ENCODE measurements at regions of chrX and their contacts with region 1.

Region 1: GRCh38 chrX:20141281-20142220 is at the start of gene EIF1AX:
- DNase-seq: peak; percentile 88 to 99 (median 96)
- ATAC-seq: peak; percentile 98
- H3K4me3 ChIP-seq: peak within 1 kb of the TSS; percentile 73 to 91
- H3K4me3 Mint-ChIP-seq: peak within 1 kb of the TSS; percentile 85
- H3K27ac ChIP-seq: peak within 1 kb of the TSS; percentile 79 to 84
- H3K27ac Mint-ChIP-seq: peak within 1 kb of the TSS; percentile 89
- H3K4me1 ChIP-seq: peaks cover 15% of the 10 kb centered on the region
- H3K4me1 Mint-ChIP-seq: peaks cover 26% of the 10 kb centered on the region
- H3K27me3 ChIP-seq: no peaks in the 10 kb centered on the region
- H3K27me3 Mint-ChIP-seq: no peaks in the 10 kb centered on the region
- CTCF ChIP-seq: no peak
- total RNA-seq, gene EIF1AX: 71.7 to 73.3 TPM

Region 2: GRCh38 chrX:20071511-20072079 is 70.0 kb before region 1 on chrX:
- CTCF ChIA-PET with region 1: no interaction called
- POLR2A ChIA-PET with region 1: no interaction called
- intact Hi-C with region 1: no loop called
- DNase-seq: no peak
- ATAC-seq: no peak
- H3K4me3 ChIP-seq: no peak overlapping the region
- H3K4me3 Mint-ChIP-seq: no peak overlapping the region
- H3K27ac ChIP-seq: no peak overlapping the region
- H3K27ac Mint-ChIP-seq: no peak overlapping the region
- H3K4me1 ChIP-seq: no peaks in the 10 kb centered on the region
- H3K4me1 Mint-ChIP-seq: no peaks in the 10 kb centered on the region
- H3K27me3 ChIP-seq: no peaks in the 10 kb centered on the region
- H3K27me3 Mint-ChIP-seq: no peaks in the 10 kb centered on the region
- CTCF ChIP-seq: no peak

Region 3: GRCh38 chrX:20116579-20117240 is 24.8 kb before region 1 on chrX and contains the start of gene MAP7D2:
- CTCF ChIA-PET with region 1: no interaction called
- POLR2A ChIA-PET with region 1: no interaction called
- intact Hi-C with region 1: no loop called
- DNase-seq: no peak
- ATAC-seq: no peak
- H3K4me3 ChIP-seq: no peak within 1 kb of the TSS
- H3K4me3 Mint-ChIP-seq: peak within 1 kb of the TSS; percentile 58
- H3K27ac ChIP-seq: no peak within 1 kb of the TSS
- H3K27ac Mint-ChIP-seq: no peak within 1 kb of the TSS
- H3K4me1 ChIP-seq: no peaks in the 10 kb centered on the region
- H3K4me1 Mint-ChIP-seq: peaks cover 8% of the 10 kb centered on the region
- H3K27me3 ChIP-seq: no peaks in the 10 kb centered on the region
- H3K27me3 Mint-ChIP-seq: peaks cover 13% of the 10 kb centered on the region
- CTCF ChIP-seq: no peak
- total RNA-seq, gene MAP7D2: 0.11 TPM in 1 of 2 experiments, not detected in the other

Region 4: GRCh38 chrX:20266810-20267606 is 125.5 kb after region 1 on chrX and contains the start of gene RPS6KA3:
- CTCF ChIA-PET with region 1: no interaction called
- POLR2A ChIA-PET with region 1: no interaction called
- intact Hi-C with region 1: loop called (anchors 2 kb)
- DNase-seq: peak; percentile 79 to 94 (median 89)
- ATAC-seq: peak; percentile 83
- H3K4me3 ChIP-seq: peak within 1 kb of the TSS; percentile 70 to 85
- H3K4me3 Mint-ChIP-seq: peak within 1 kb of the TSS; percentile 96
- H3K27ac ChIP-seq: peak within 1 kb of the TSS; percentile 80 to 83
- H3K27ac Mint-ChIP-seq: peak within 1 kb of the TSS; percentile 97
- H3K4me1 ChIP-seq: peaks cover 14% of the 10 kb centered on the region
- H3K4me1 Mint-ChIP-seq: peaks cover 19% of the 10 kb centered on the region
- H3K27me3 ChIP-seq: no peaks in the 10 kb centered on the region
- H3K27me3 Mint-ChIP-seq: no peaks in the 10 kb centered on the region
- CTCF ChIP-seq: no peak
- total RNA-seq, gene RPS6KA3: 36.9 to 37.3 TPM

Measured in CD8-positive, alpha-beta T cell (primary cell).